ENCODE measurements at regions of chr11 and their contacts with region 1.

Region 1: DNA sequence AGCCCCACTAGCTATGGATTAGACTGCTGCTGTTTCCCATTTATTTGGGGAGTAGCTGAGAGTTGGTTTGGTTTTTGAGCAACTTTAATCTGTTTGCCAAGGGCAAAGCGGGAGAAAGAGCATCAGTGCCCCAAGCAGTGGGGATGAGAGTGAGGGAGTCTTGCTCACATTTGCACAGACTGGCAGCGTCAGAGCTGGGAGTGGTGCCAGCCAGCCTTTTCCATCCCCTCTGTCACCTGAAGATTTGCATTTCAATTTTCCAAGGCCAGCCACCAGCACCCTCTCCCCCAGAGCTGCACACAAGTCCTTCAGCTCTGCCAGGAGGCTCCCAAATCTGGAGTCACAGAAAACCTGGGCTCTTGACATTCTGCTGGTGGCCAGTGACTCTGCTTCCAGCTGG is 21.0 kb upstream of the UVRAG start:
- DNase-seq: peak; percentile 39

Region 2: DNA sequence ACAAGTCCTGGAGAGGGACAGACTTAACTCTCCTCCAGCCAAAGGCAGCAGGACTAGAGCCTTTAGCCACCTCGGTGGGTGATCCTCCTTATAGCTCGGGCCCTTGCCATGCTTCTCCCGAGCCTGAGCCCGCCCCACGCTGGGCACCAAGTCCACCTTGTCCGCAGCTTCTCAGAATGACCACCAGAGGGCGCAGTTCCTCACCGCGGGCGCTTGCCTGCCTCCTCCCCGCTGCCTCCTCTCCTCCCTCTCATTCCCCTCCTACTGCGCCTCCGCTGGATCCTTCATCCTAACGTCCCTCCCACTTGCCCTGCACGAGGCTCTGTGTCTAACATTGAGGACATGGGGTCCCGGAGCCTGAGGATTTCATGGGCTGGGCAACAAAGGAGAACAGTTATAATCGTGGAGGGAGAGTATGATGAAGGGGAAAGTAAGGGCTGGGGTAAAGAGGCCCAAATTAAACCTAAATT is 87.7 kb before region 1 on chr11:
- intact Hi-C with region 1: loop called (anchors 5 kb)
- DNase-seq: peak; percentile 91

Region 3: GRCh38 chr11:76025068-76025467 is 231.1 kb after region 1 on chr11:
- intact Hi-C with region 1: no loop called
- DNase-seq: no peak

Measured in cardiac septum (tissue), 1 donor.